Activated CD4-positive, alpha-beta T cell treated with anti-CD3 and anti-CD28 coated beads, Interleukin-2, amount 10 ng/mL, durations not matched to agents 7 days and 5 days (primary cell): ENCODE measurements at regions of chr14 and their contacts with region 1.

Region 1: GRCh38 chr14:88005978-88006851 is 1.3 kb downstream of the GPR65 start:
- DNase-seq: peak; percentile 83
- H3K4me3 Mint-ChIP-seq: peak overlapping the region; percentile 90
- H3K27ac Mint-ChIP-seq: peak overlapping the region; percentile 97
- H3K4me1 Mint-ChIP-seq: peaks cover 70% of the 10 kb centered on the region
- H3K27me3 Mint-ChIP-seq: no peaks in the 10 kb centered on the region

Region 2: DNA sequence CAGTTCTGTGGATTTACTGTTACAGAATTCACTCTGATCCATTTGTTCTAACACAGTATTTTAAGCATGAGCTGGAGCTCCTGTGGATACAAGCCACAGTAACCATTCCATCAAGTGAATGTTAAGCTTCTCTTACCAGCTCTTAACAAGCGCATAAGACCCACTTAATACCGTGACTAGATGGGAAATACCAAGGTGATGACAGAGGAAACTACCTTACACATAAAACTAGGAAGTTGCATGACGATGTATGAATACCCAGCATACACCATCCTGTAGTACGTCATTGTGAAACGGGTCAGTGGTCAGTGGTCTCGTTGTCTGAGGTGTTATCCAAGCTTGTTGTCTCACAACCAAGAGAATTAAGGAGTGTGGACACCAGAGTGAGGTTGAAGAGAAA is 11.2 kb before region 1 on chr14:
- CTCF ChIA-PET with region 1: interaction called, 15 read pairs
- POLR2A ChIA-PET with region 1: interaction called, 9 read pairs
- DNase-seq: no peak
- H3K4me3 Mint-ChIP-seq: no peak overlapping the region
- H3K27ac Mint-ChIP-seq: peak overlapping the region; percentile 98
- H3K4me1 Mint-ChIP-seq: peaks cover 70% of the 10 kb centered on the region
- H3K27me3 Mint-ChIP-seq: no peaks in the 10 kb centered on the region

Region 3: GRCh38 chr14:88032383-88032782 is 26.2 kb after region 1 on chr14:
- CTCF ChIA-PET with region 1: no interaction called
- POLR2A ChIA-PET with region 1: no interaction called
- DNase-seq: no peak
- H3K4me3 Mint-ChIP-seq: no peak overlapping the region
- H3K27ac Mint-ChIP-seq: no peak overlapping the region
- H3K4me1 Mint-ChIP-seq: peaks cover 26% of the 10 kb centered on the region
- H3K27me3 Mint-ChIP-seq: no peaks in the 10 kb centered on the region

Region 4: DNA sequence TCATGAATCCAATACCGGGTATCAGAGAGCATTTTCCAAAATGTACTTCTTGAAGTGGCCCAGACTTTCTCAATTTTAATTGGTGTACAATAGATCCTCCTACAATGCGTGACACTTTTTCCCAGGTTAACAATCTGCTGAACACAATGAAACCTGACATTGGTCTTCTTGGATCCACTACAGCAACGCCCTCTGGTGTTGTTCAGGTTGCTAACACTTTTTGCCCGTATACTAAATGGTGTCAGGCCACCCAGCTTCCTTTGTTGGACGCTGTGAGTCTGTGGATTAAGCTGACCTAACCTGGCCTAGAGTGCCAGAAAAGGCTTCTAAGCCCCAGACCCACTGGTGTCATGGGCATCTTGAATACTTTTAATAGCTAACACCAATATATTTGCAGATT is 227.7 kb after region 1 on chr14:
- CTCF ChIA-PET with region 1: no interaction called
- POLR2A ChIA-PET with region 1: no interaction called
- DNase-seq: peak; percentile 7
- H3K4me3 Mint-ChIP-seq: no peak overlapping the region
- H3K27ac Mint-ChIP-seq: no peak overlapping the region
- H3K4me1 Mint-ChIP-seq: no peaks in the 10 kb centered on the region
- H3K27me3 Mint-ChIP-seq: peaks cover 23% of the 10 kb centered on the region